Naive thymus-derived CD8-positive, alpha-beta T cell (primary cell): ENCODE measurements at regions of chr12 and their contacts with region 1.

Region 1: DNA sequence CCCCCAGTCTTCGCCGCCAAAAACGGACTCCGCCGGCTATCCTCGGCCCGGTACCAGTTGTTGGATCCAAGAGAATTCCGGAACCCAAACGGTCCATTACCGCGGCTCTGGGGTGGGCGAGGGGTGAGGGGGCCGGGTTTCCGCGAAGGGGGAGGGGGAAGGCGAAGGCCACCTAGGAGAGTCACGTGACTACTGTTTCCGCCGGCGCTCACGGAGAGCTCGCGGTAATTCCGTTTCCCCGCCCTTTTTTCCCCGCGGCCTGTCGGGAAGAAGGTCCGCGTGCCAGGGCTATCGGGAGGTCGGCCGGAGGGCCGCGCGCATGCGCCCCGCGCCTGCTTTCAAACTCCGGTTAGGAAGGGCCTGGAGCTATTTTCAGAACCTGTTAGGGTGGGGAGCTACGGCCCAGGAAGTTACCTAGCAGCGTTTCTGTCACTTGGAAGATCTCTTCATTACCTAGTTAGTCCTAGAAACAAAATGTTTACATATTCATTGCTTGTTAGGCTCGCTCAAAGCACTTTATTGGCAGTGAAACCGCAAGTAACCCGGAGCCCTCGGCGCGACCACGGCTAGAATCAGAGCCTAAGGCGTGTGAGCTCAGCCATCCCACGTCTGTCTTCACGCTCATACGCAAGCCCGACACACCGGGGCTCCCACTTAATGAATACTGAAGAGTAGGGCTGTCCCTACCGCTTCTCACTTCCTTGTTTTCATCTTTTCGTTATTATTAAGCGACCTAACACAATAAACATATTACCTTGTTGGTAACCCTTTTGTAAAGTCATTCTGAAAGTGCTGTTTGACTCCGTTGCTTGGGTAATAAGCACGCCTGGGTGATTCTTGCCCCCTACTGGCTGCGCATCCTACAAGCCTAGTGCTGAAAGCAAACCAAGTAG is 624 bp upstream of the SBNO1 start:
- DNase-seq: peak; percentile 96 to 99 (median 98)
- ATAC-seq: peak; percentile 76 to 84
- H3K4me3 Mint-ChIP-seq: peak overlapping the region; percentile 86 to 97 (median 91)
- H3K27ac Mint-ChIP-seq: peak overlapping the region; percentile 92 to 97 (median 96)
- H3K4me1 Mint-ChIP-seq: peaks cover 11 to 31% (median 26%) of the 10 kb centered on the region in 4 donors
- H3K27me3 Mint-ChIP-seq: no peaks in the 10 kb centered on the region

Region 2: DNA sequence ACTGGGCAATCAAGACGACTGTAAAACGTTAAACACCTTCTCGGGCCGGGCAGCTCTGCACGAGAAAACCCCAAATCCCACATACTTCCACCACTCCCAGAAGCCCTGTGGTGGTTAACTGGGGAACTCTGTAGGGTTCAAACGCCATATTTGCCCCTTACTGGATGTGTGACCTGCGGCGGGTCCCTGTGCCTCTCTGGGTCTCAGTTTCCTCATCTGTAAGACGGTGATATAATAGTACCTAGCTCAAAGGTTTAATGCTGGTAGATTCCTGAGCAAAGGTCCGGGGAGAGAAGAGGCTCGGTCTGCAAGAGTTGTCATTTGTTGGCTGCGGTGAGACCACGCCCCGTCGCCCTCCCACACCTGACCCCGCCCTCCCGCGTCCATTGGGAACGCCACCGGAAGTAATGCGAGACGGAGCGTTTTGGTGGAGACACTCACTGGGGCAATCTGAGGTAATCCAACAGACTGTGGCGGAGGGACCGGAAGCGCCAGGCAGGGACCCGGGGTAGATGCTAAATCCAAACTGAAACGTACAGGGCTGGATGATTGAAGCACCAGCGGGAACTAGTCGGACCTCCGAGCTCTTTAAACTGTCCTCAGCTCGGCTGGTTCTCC is 390.9 kb before region 1 on chr12:
- POLR2A ChIA-PET with region 1: interaction called, 11 read pairs
- DNase-seq: peak; percentile 94 to 99 (median 98)
- ATAC-seq: peak; percentile 82 to 87
- H3K4me3 Mint-ChIP-seq: peak overlapping the region; percentile 92 to 99 (median 98)
- H3K27ac Mint-ChIP-seq: peak overlapping the region; percentile 97 to 100 (median 99)
- H3K4me1 Mint-ChIP-seq: peaks cover 6 to 40% (median 21%) of the 10 kb centered on the region in 4 donors
- H3K27me3 Mint-ChIP-seq: no peaks in the 10 kb centered on the region

Region 3: DNA sequence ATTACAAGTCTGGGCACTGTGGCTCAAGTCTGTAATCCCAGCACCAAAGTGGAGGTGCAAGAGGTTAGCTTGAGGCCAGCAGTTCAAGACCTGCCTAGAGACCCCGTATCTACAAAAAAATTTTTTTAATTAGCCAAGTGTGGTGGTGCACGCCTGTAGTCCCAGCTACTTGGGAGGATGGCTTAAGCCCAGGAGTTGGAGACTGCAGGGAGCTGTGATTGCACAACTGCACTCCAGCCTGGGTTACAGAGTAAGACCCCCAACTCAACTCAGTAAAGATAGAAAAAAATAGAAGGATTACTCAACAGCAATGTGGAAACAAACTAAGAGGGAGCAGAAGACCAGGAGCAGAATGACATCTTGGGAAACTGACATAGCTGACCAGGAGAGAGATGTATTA is 13.9 kb before region 1 on chr12:
- POLR2A ChIA-PET with region 1: interaction called, 11 read pairs
- DNase-seq: no peak
- ATAC-seq: no peak
- H3K4me3 Mint-ChIP-seq: no peak overlapping the region
- H3K27ac Mint-ChIP-seq: peak overlapping the region in 5 of 10 donors; percentile 0 to 82 (median 42)
- H3K4me1 Mint-ChIP-seq: peaks cover 15 to 52% (median 50%) of the 10 kb centered on the region in 4 donors
- H3K27me3 Mint-ChIP-seq: no peaks in the 10 kb centered on the region

Region 4: DNA sequence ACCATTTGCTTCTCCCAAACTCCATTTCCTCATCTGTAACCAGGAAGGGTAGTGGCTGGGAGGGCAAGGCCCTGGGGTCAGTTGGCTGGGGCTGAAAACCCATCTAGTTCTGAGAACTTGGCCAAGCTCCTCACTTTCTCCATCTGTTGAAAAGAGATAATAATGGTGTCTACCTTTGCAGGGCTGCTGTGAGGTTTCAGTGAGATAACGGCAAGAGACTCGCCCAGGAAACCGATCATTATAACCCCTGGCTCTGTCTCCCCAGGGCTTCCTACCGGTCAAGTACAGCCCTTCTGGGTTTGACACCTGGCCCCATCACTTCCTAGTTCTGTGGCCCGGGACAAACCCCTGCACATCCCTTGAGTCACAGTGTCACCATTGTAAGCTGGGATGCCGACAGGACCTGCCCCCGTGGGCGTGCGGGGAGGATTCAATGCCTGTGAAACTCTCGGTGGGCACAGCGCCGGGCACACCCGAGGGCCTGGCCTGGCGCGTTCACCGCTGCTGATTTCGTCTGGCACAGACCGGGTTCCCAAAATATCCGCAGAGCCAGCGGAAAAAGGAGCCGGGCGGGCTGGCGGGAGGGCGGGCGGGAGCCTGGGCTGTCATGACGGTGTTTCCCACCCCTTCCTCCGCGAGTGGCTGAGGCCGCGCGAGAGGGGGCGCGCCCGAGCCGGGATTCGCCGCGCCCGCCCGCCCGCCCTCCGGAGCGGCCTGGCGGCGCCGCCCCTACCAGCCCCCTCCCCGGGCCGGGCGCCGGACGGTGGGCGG is 23.1 kb after region 1 on chr12:
- POLR2A ChIA-PET with region 1: interaction called, 72 read pairs
- DNase-seq: peak; percentile 53 to 83 (median 77)
- ATAC-seq: peak; percentile 67
- H3K4me3 Mint-ChIP-seq: peak overlapping the region; percentile 73 to 92 (median 87)
- H3K27ac Mint-ChIP-seq: peak overlapping the region; percentile 57 to 93 (median 86)
- H3K4me1 Mint-ChIP-seq: peaks cover 13 to 53% (median 35%) of the 10 kb centered on the region in 4 donors
- H3K27me3 Mint-ChIP-seq: no peaks in the 10 kb centered on the region

Region 5: GRCh38 chr12:123453165-123453564 is 87.9 kb after region 1 on chr12:
- POLR2A ChIA-PET with region 1: interaction called, 13 read pairs
- DNase-seq: peak in 5 of 10 donors; percentile 26 to 74 (median 72)
- ATAC-seq: peak in 1 of 2 donors; percentile 21
- H3K4me3 Mint-ChIP-seq: no peak overlapping the region
- H3K27ac Mint-ChIP-seq: no peak overlapping the region
- H3K4me1 Mint-ChIP-seq: peaks cover 6 to 19% (median 12%) of the 10 kb centered on the region in 4 donors
- H3K27me3 Mint-ChIP-seq: no peaks in the 10 kb centered on the region

Region 6: GRCh38 chr12:123457980-123458783 is 92.9 kb after region 1 on chr12 and contains the start of gene SNRNP35:
- POLR2A ChIA-PET with region 1: interaction called, 13 read pairs
- DNase-seq: peak; percentile 77 to 98 (median 83)
- ATAC-seq: peak; percentile 82 to 84
- H3K4me3 Mint-ChIP-seq: peak within 1 kb of the TSS; percentile 98 to 100 (median 100)
- H3K27ac Mint-ChIP-seq: peak within 1 kb of the TSS; percentile 100
- H3K4me1 Mint-ChIP-seq: peaks cover 14 to 41% (median 28%) of the 10 kb centered on the region in 4 donors
- H3K27me3 Mint-ChIP-seq: no peaks in the 10 kb centered on the region
- polyA plus RNA-seq, gene SNRNP35: 16.8 to 27.0 (median 20.4) TPM